Activated B cell treated with CpG ODN at 0.5 μM for 24 hours (primary cell): ENCODE measurements at regions of chr3 and their contacts with region 1.

Region 1: DNA sequence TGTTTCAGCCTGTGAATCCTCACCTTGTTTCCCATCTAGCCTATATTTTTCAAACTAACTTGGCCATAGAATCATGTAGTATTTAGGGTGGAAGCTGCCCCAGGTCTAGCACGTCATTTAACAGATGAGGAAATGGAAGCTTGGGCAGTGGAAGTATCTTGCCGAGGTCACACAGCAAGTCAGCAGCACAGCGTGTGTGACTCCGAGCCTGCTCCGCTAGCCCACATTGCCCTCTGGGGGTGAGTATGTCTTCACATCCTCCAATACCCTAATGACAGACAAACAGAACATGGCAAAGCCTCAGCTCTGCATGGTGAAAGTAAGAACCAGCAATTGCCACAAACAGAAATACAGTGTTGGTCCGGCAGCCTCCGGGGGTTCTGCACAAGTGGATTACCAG is 2.2 kb upstream of the CCR5 start:
- DNase-seq: peak; percentile 33
- ATAC-seq: peak; percentile 91
- H3K4me3 Mint-ChIP-seq: peak overlapping the region; percentile 7
- H3K27ac Mint-ChIP-seq: no peak overlapping the region
- H3K4me1 Mint-ChIP-seq: peaks cover 34% of the 10 kb centered on the region
- H3K27me3 Mint-ChIP-seq: peaks cover 2% of the 10 kb centered on the region
- CTCF ChIP-seq: no peak

Region 2: GRCh38 chr3:46214751-46215352 is 153.7 kb before region 1 on chr3:
- CTCF ChIA-PET with region 1: interaction called, 9 read pairs
- POLR2A ChIA-PET with region 1: no interaction called
- intact Hi-C with region 1: loop called (anchors 1 kb)
- DNase-seq: no peak
- ATAC-seq: no peak
- H3K4me3 Mint-ChIP-seq: no peak overlapping the region
- H3K27ac Mint-ChIP-seq: no peak overlapping the region
- H3K4me1 Mint-ChIP-seq: peaks cover under 1% of the 10 kb centered on the region
- H3K27me3 Mint-ChIP-seq: no peaks in the 10 kb centered on the region
- CTCF ChIP-seq: no peak